Mammary epithelial cell (primary cell): ENCODE measurements at regions of chr13 and their contacts with region 1.

Region 1: DNA sequence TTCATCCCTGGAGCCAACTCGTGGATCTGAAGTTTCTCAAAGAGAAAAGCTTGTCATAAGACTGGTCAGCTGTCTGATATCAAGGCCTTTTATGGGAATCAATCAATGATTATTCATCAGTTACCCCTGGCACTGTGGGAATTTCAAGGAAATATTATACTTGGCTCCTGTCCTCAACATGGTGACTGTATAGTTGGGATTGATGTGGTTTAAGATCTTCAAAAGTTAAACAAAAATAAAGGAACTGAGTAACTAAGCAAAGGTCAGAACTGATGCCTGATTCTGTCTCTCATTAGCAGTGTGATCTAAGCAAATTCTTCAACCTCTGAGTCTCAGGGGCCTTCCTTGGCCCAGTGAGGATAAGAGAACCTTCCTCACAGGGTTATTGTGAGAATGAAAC is 22.2 kb upstream of the SERPINE3 start:
- DNase-seq: peak; percentile 20
- H3K4me3 ChIP-seq: no peak overlapping the region
- H3K27ac ChIP-seq: no peak overlapping the region
- H3K4me1 ChIP-seq: no peaks in the 10 kb centered on the region
- H3K27me3 ChIP-seq: no peaks in the 10 kb centered on the region
- CTCF ChIP-seq: no peak

Region 2: GRCh38 chr13:51271528-51272085 is 45.7 kb before region 1 on chr13:
- CTCF ChIA-PET with region 1: no interaction called
- dilution Hi-C with region 1: loop called (anchors 5 kb)
- in situ Hi-C with region 1: no loop called
- intact Hi-C with region 1: no loop called
- DNase-seq: no peak
- H3K4me3 ChIP-seq: no peak overlapping the region
- H3K27ac ChIP-seq: no peak overlapping the region
- H3K4me1 ChIP-seq: no peaks in the 10 kb centered on the region
- H3K27me3 ChIP-seq: peaks cover 9% of the 10 kb centered on the region
- CTCF ChIP-seq: no peak